Activated naive CD4-positive, alpha-beta T cell treated with anti-CD3 and anti-CD28 coated beads for 36 hours (primary cell): ENCODE measurements at regions of chr2 and their contacts with region 1.

Region 1: GRCh38 chr2:148726228-148726627 is 81.7 kb downstream of the EPC2 start:
- DNase-seq: no peak
- H3K4me3 Mint-ChIP-seq: no peak overlapping the region
- H3K27ac Mint-ChIP-seq: peak overlapping the region; percentile 10
- H3K4me1 Mint-ChIP-seq: peaks cover 55% of the 10 kb centered on the region
- H3K27me3 Mint-ChIP-seq: no peaks in the 10 kb centered on the region

Region 2: GRCh38 chr2:148702475-148702874 is 23.8 kb before region 1 on chr2:
- CTCF ChIA-PET with region 1: interaction called, 3 read pairs
- intact Hi-C with region 1: loop called (anchors 1 kb)
- DNase-seq: no peak
- H3K4me3 Mint-ChIP-seq: no peak overlapping the region
- H3K27ac Mint-ChIP-seq: no peak overlapping the region
- H3K4me1 Mint-ChIP-seq: peaks cover 36% of the 10 kb centered on the region
- H3K27me3 Mint-ChIP-seq: no peaks in the 10 kb centered on the region